Natural killer cell (primary cell): ENCODE measurements at regions of chr6 and their contacts with region 1.

Region 1: DNA sequence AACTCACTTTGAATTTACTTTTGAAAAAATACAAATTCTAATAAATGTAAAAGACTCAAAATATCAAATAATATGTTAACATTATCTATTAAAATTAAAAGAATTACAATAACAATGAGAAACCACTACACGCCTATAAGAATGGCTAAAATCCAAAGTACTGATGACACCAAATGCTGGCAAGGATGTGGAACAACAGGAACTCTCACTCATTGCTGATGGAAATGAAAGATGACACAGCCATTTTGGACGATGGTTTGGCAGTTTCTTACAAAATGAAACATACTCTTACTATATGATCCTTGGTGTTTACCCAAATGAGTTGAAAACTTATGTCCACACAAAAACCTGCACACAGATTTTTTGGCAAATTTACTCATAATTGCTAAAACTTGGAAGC is 15.6 kb upstream of the STX11 start:
- DNase-seq: no peak
- ATAC-seq: no peak
- H3K4me3 ChIP-seq: no peak overlapping the region
- H3K4me3 Mint-ChIP-seq: no peak overlapping the region
- H3K27ac ChIP-seq: no peak overlapping the region
- H3K27ac Mint-ChIP-seq: no peak overlapping the region
- H3K4me1 ChIP-seq: no peaks in the 10 kb centered on the region
- H3K4me1 Mint-ChIP-seq: no peaks in the 10 kb centered on the region
- H3K27me3 ChIP-seq: no peaks in the 10 kb centered on the region
- H3K27me3 Mint-ChIP-seq: peaks cover 7% of the 10 kb centered on the region in 2 donors
- CTCF ChIP-seq: no peak

Region 2: GRCh38 chr6:142702501-142703460 is 1432.0 kb before region 1 on chr6:
- intact Hi-C with region 1: no loop called
- DNase-seq: no peak
- ATAC-seq: peak in 2 of 3 donors; percentile 21 to 68
- H3K4me3 ChIP-seq: no peak overlapping the region
- H3K4me3 Mint-ChIP-seq: no peak overlapping the region
- H3K27ac ChIP-seq: no peak overlapping the region
- H3K27ac Mint-ChIP-seq: no peak overlapping the region
- H3K4me1 ChIP-seq: peaks cover 8% of the 10 kb centered on the region
- H3K4me1 Mint-ChIP-seq: peaks cover 0 to 8% of the 10 kb centered on the region in 2 donors
- H3K27me3 ChIP-seq: no peaks in the 10 kb centered on the region
- H3K27me3 Mint-ChIP-seq: no peaks in the 10 kb centered on the region
- CTCF ChIP-seq: no peak

Region 3: GRCh38 chr6:143642403-143642802 is 492.3 kb before region 1 on chr6:
- intact Hi-C with region 1: loop called (anchors 5 kb)
- DNase-seq: no peak
- ATAC-seq: no peak
- H3K4me3 ChIP-seq: no peak overlapping the region
- H3K4me3 Mint-ChIP-seq: no peak overlapping the region
- H3K27ac ChIP-seq: no peak overlapping the region
- H3K27ac Mint-ChIP-seq: no peak overlapping the region
- H3K4me1 ChIP-seq: no peaks in the 10 kb centered on the region
- H3K4me1 Mint-ChIP-seq: peaks cover 4 to 31% of the 10 kb centered on the region in 2 donors
- H3K27me3 ChIP-seq: no peaks in the 10 kb centered on the region
- H3K27me3 Mint-ChIP-seq: no peaks in the 10 kb centered on the region
- CTCF ChIP-seq: no peak